ENCODE measurements at regions of chr11 and their contacts with region 1.

Region 1: DNA sequence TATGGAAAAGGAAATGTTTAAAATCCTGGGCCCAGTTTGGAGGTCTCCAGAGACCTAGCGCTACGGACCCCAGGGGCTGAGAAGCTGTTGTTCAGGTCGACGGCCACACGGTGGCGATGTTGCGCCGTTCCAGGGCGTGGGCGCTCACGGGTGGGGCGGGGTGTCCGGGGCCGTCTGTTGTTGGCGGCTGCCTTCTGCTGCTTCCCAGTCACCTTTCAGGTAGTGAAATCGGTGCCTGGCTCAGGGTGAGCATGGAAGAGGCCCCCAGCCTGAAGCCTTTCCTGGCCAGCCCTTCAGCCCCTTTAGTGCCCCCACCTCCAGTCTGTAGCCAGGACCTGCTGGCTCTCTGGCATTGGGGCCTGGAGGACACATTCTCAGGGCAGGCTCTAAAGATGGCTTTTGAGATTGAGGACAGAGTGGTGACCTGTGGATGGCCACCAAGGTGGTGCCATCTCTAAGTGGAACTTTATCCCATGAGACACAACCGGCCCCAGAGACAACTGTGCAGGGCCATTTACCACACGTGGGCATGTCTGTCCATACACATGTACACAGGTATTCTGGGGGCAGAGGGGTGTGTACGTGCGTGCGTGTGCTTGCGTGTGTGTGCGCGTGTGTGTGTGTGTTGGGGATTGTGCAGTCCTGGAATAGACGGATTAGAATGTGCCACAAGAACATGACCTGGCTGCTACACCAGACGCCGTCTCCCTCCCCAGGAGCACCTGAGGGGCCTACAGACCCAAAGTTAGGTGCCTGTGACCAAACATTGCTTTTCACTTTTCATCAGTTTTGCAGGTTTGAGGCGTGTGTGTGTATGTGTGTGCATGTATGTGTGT is 53.8 kb downstream of the ST14 start:
- DNase-seq: peak; percentile 39
- H3K4me3 ChIP-seq: no peak overlapping the region
- H3K27ac ChIP-seq: no peak overlapping the region
- H3K4me1 ChIP-seq: no peaks in the 10 kb centered on the region
- H3K27me3 ChIP-seq: no peaks in the 10 kb centered on the region
- CTCF ChIP-seq: peak; percentile 84 to 89 (median 87)
- POLR2A ChIP-seq: no peak

Region 2: DNA sequence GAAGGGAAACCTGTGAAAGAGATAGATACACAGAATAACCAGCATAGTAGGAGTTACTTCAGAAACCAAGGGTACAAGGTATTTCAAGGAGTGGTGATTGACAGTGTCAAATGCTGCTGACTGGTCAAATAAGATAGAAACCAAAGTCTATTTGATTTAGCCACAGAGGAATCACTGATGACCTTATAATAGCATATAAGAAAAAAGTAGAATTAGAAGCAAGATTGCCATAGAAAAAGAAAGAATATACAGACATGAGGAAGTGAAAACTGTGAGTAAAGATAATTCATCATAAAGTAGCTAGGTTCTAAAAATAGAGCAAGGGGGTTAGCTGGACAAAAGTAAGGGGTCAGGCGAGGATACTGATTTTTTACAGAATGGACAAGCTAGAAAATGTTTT is 87.2 kb after region 1 on chr11:
- intact Hi-C with region 1: no loop called
- DNase-seq: no peak
- H3K4me3 ChIP-seq: no peak overlapping the region
- H3K27ac ChIP-seq: no peak overlapping the region
- H3K4me1 ChIP-seq: no peaks in the 10 kb centered on the region
- H3K27me3 ChIP-seq: no peaks in the 10 kb centered on the region
- CTCF ChIP-seq: no peak
- POLR2A ChIP-seq: no peak

Region 3: DNA sequence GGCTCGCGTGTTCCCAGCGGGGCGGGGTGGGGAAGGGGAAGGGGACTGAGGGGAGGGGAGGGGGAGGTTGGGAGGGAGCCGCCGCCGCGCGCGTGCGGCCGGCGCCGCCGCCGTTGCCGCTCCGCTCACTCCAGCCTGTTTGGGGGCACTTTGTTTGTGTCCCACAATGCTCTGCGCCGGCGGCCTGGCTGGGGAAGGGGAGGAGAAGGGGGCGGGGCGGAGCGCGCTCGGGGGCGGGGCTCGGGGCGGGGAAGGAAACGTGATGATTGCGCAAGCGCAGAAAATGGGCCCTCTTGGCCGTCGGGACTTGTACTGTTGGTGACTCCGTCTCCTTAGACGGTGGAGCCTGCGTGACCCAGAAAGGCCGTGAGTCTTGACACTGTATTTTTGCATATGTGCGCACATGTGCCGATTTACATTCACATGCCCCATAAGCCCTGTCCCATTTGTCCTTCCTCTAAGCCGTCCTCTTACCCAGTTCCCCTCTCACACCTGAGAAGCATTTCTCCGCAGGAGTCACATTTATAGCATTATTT is 101.5 kb after region 1 on chr11 and contains the start of gene ZBTB44:
- intact Hi-C with region 1: loop called (anchors 5 kb)
- DNase-seq: peak; percentile 92
- H3K4me3 ChIP-seq: peak within 1 kb of the TSS; percentile 80 to 87
- H3K27ac ChIP-seq: peak within 1 kb of the TSS; percentile 93 to 97
- H3K4me1 ChIP-seq: no peaks in the 10 kb centered on the region
- H3K27me3 ChIP-seq: no peaks in the 10 kb centered on the region
- CTCF ChIP-seq: no peak
- POLR2A ChIP-seq: peak; percentile 66
- total RNA-seq, gene ZBTB44: 35.9 to 80.3 TPM

Region 4: DNA sequence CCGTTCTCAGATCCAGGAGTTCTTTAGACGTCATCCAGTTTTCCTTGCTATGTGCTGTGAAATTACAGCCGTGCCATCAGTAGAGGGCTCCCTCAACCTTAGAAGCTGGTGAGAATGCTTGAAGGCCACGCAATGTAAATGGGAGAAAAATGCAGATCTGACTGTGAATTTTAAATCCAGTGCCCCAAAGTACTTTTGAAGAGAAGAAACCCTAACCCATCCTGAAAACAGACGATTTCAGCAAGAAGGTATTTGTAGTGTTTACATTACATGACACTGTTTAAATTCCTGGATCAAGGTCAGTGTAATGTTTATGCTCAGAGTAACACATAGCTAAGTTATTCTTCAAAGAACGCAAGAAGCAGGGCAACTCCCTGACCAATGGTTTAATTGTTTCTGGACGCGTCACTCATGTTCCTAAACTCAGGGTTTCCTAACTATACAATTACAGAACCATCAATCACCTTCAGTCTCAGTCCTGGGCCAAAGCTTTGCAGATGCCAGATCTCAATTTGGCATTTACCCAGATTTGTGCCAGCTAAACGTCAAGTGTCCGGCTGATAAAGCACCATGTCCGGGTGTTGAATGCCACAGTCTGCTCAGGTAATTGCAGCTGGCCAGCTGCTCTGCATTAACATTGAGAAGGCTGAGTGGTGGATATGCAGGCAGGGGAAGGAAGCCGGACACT is 176.9 kb after region 1 on chr11:
- intact Hi-C with region 1: loop called (anchors 5 kb)
- DNase-seq: no peak
- H3K4me3 ChIP-seq: no peak overlapping the region
- H3K27ac ChIP-seq: no peak overlapping the region
- H3K4me1 ChIP-seq: no peaks in the 10 kb centered on the region
- H3K27me3 ChIP-seq: no peaks in the 10 kb centered on the region
- CTCF ChIP-seq: peak in 2 of 4 experiments; percentile 18 to 20
- POLR2A ChIP-seq: no peak

Region 5: GRCh38 chr11:130427581-130428315 is 214.4 kb after region 1 on chr11:
- intact Hi-C with region 1: loop called (anchors 2 kb)
- DNase-seq: no peak
- H3K4me3 ChIP-seq: peak overlapping the region; percentile 21 to 33
- H3K27ac ChIP-seq: no peak overlapping the region
- H3K4me1 ChIP-seq: peaks cover 6% of the 10 kb centered on the region
- H3K27me3 ChIP-seq: peaks cover 5% of the 10 kb centered on the region
- CTCF ChIP-seq: peak in 1 of 4 experiments; percentile 34
- POLR2A ChIP-seq: no peak